ENCODE measurements at regions of chr18 and their contacts with region 1.

Region 1: GRCh38 chr18:13374468-13375301 is 156.1 kb downstream of the LDLRAD4 start:
- DNase-seq: peak in 8 of 10 donors; percentile 54 to 89 (median 80)
- H3K4me3 ChIP-seq: peak overlapping the region in 27 of 59 donors; percentile 1 to 42 (median 17)
- H3K27ac ChIP-seq: peak overlapping the region in 58 of 59 donors; percentile 51 to 96 (median 86)
- H3K27me3 ChIP-seq: no peaks in the 10 kb centered on the region
- CTCF ChIP-seq: no peak

Region 2: DNA sequence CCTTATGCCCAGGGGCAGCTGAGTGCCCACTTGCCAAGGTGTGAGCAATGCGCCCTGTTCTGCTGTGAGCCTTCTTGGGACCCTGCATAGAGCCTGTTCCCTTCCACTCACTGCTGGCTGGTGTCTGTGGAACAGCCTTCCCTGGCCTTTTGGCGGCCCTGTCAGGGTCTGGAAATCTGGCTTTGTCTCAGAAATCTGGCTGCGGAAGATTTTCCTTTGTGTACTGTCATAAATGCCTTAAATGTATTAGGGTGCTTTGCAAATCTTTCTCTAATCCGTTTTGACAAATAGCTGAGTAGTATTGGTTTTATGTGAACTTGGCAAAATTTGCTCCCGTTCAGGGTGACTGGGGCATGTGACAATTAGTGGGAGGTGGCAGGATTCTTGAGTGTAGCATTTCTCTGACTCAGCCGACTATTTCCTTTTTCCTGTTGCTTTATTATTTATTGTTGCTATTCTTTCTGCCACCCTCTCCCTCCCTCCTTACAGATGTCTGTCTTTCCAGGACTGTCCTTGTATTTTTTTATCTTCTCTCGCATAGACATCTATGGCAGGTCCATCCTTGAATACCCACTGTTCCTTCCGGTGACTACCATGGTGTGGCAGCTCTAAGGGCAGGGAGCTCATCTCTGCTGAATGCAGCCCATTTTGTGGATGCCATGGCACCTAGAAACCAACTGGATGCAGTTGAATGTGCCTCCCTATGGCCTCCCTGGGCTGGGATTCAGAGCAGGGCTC is 114.3 kb before region 1 on chr18:
- intact Hi-C with region 1: loop called (anchors 5 to 10 kb)
- DNase-seq: peak in 1 of 10 donors; percentile 8
- H3K4me3 ChIP-seq: no peak overlapping the region
- H3K27ac ChIP-seq: peak overlapping the region in 22 of 59 donors; percentile 3 to 78 (median 32)
- H3K27me3 ChIP-seq: no peaks in the 10 kb centered on the region
- CTCF ChIP-seq: no peak

Region 3: DNA sequence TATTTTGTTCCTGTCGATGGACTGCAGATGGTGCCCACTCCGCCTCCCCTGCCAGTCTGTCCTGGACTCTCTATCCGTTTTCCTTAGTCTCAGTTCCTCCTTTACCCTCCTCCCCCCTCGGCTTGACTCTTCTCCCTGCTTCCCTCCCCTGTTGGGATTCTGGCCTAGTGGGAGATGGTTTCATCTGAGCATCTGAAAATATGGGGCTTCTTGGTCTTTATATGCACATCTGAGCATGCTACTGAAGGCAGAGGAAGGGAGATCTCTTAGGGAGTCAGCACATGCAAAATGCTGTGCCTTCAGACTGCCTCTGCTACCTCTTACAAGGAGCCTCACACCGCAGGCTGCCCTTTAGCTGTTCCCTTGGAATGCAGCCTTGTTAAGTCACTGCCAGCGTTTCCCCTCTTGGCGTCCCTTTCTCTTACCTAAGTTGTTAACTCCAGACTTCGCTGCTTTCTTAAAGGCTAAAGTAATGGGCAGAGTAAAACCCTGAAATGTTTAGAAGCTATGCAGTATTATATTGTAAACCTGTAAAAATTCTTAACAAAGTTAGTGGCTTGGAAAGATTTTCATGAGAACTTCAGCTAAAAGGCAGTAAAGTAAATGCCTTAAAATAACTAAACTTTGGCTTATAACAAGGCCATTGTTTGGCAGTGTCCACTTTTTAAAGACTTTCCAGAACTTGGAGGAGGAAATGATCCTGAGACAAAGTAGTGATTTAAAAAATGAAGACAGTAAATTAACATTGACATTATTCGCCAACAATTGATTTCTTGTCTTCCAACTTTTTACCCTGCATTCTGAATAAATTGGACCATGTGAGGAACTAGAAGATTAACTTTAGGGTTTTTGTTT is 106.3 kb before region 1 on chr18:
- intact Hi-C with region 1: loop called (anchors 5 to 10 kb)
- DNase-seq: no peak
- H3K4me3 ChIP-seq: no peak overlapping the region
- H3K27ac ChIP-seq: peak overlapping the region in 6 of 59 donors; percentile 0 to 45 (median 19)
- H3K27me3 ChIP-seq: no peaks in the 10 kb centered on the region
- CTCF ChIP-seq: no peak

Region 4: GRCh38 chr18:13302457-13303225 is 72.0 kb before region 1 on chr18:
- intact Hi-C with region 1: loop called in 1 of 2 experiments (anchors 10 kb)
- DNase-seq: no peak
- H3K4me3 ChIP-seq: peak overlapping the region in 5 of 59 donors; percentile 10 to 42 (median 20)
- H3K27ac ChIP-seq: peak overlapping the region in 42 of 59 donors; percentile 2 to 83 (median 46)
- H3K27me3 ChIP-seq: no peaks in the 10 kb centered on the region
- CTCF ChIP-seq: no peak

Region 5: GRCh38 chr18:13611601-13612195 is 237.0 kb after region 1 on chr18:
- intact Hi-C with region 1: loop called in 1 of 2 experiments (anchors 10 kb)
- DNase-seq: peak in 8 of 10 donors; percentile 57 to 77 (median 74)
- H3K4me3 ChIP-seq: peak overlapping the region; percentile 39 to 78 (median 63)
- H3K27ac ChIP-seq: peak overlapping the region; percentile 81 to 99 (median 96)
- H3K27me3 ChIP-seq: no peaks in the 10 kb centered on the region
- CTCF ChIP-seq: peak in 5 of 56 donors; percentile 3 to 14 (median 6)

Measured in dorsolateral prefrontal cortex (tissue), 120 donors.